ENCODE measurements at regions of chr17 and their contacts with region 1.

Region 1: GRCh38 chr17:80008383-80008840 is 27.3 kb downstream of the TBC1D16 start:
- DNase-seq: peak; percentile 53 to 84 (median 67)
- ATAC-seq: peak; percentile 88
- H3K4me3 ChIP-seq: no peak overlapping the region
- H3K4me3 Mint-ChIP-seq: no peak overlapping the region
- H3K27ac ChIP-seq: no peak overlapping the region
- H3K27ac Mint-ChIP-seq: no peak overlapping the region
- H3K4me1 ChIP-seq: peaks cover 17% of the 10 kb centered on the region
- H3K4me1 Mint-ChIP-seq: peaks cover 8% of the 10 kb centered on the region
- H3K27me3 ChIP-seq: no peaks in the 10 kb centered on the region
- H3K27me3 Mint-ChIP-seq: no peaks in the 10 kb centered on the region
- CTCF ChIP-seq: peak; percentile 81

Region 2: DNA sequence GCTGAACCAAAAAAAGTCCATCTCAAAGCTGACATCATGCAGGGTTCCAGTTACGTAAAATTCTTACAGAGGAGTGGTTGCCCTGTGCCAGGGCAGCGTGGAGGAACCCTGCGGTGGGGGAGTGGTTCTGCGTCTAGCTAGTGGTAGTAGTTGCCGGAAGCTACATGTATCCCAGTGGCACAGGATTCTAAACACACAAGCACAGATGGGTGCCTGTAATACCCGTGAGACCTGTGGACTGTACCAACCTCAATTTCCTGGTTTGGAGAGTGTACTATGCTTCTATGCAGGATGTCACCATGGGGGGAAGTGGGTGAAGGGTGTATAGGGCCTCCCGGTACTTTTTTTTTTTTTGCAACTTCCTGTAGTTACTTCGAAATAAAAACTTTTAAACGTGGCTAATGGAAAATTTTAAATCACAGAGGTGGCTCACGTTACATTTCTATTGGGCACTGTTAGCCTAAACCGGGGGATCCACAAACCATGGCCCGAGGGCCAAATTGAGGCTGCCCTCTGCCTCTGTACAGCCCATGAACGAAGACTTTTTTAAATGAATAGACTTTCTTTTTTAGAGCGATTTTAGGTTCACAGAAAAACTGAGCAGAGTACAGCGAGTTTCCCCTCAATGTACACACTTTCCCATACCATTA is 11.3 kb before region 1 on chr17:
- CTCF ChIA-PET with region 1: interaction called, 7 read pairs
- POLR2A ChIA-PET with region 1: interaction called, 11 read pairs
- intact Hi-C with region 1: no loop called
- DNase-seq: peak; percentile 45 to 98 (median 66)
- ATAC-seq: peak; percentile 95
- H3K4me3 ChIP-seq: peak overlapping the region; percentile 41
- H3K4me3 Mint-ChIP-seq: peak overlapping the region; percentile 85
- H3K27ac ChIP-seq: peak overlapping the region; percentile 76 to 93
- H3K27ac Mint-ChIP-seq: peak overlapping the region; percentile 87
- H3K4me1 ChIP-seq: peaks cover 58% of the 10 kb centered on the region
- H3K4me1 Mint-ChIP-seq: peaks cover 51% of the 10 kb centered on the region
- H3K27me3 ChIP-seq: no peaks in the 10 kb centered on the region
- H3K27me3 Mint-ChIP-seq: no peaks in the 10 kb centered on the region
- CTCF ChIP-seq: no peak

Region 3: DNA sequence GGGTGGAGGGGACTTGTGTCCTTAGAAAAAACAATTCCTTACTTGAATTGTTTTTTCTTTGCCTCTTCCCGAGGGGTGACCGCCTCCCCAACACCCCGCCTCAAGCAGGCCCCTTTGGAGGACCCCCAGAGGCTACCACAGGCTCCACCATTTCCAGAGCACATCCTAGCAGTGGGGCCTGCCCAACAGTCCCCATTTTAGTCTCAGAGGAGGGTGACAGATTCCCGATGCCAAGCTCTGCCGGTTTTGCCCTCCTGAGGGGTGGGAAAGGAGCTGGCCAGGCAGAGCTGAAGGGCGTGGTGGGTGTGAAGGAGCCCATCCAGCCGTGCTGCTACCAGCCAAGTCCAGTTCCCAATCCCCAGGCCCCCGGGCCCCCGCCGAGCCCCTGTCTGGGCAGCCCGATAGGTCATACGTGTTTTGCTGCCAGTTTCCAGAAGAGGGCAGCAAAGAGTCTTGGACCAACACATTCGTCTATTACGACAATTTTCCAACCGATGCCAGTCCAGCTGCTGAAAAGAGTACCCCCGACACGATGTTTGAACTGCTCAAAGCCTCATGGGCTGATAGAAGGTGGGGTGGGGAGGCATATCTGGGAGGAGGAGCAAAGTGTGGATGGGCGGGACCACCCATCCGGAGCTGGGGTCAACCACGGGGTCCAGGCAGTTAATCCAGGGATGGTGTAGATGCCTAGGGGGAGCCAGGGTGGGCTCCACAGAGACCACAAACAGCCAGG is 74.2 kb after region 1 on chr17:
- CTCF ChIA-PET with region 1: interaction called, 3 read pairs
- POLR2A ChIA-PET with region 1: no interaction called
- intact Hi-C with region 1: loop called in 1 of 2 experiments (anchors 5 kb)
- DNase-seq: peak; percentile 38 to 82 (median 51)
- ATAC-seq: peak; percentile 72
- H3K4me3 ChIP-seq: no peak overlapping the region
- H3K4me3 Mint-ChIP-seq: no peak overlapping the region
- H3K27ac ChIP-seq: no peak overlapping the region
- H3K27ac Mint-ChIP-seq: no peak overlapping the region
- H3K4me1 ChIP-seq: peaks cover 6% of the 10 kb centered on the region
- H3K4me1 Mint-ChIP-seq: peaks cover 6% of the 10 kb centered on the region
- H3K27me3 ChIP-seq: no peaks in the 10 kb centered on the region
- H3K27me3 Mint-ChIP-seq: peaks cover 5% of the 10 kb centered on the region
- CTCF ChIP-seq: peak; percentile 82

Region 4: GRCh38 chr17:80203471-80203963 is 195.1 kb after region 1 on chr17:
- CTCF ChIA-PET with region 1: no interaction called
- POLR2A ChIA-PET with region 1: no interaction called
- intact Hi-C with region 1: no loop called
- DNase-seq: no peak
- ATAC-seq: no peak
- H3K4me3 ChIP-seq: no peak overlapping the region
- H3K4me3 Mint-ChIP-seq: no peak overlapping the region
- H3K27ac ChIP-seq: no peak overlapping the region
- H3K27ac Mint-ChIP-seq: no peak overlapping the region
- H3K4me1 ChIP-seq: no peaks in the 10 kb centered on the region
- H3K4me1 Mint-ChIP-seq: no peaks in the 10 kb centered on the region
- H3K27me3 ChIP-seq: no peaks in the 10 kb centered on the region
- H3K27me3 Mint-ChIP-seq: no peaks in the 10 kb centered on the region
- CTCF ChIP-seq: no peak

Region 5: DNA sequence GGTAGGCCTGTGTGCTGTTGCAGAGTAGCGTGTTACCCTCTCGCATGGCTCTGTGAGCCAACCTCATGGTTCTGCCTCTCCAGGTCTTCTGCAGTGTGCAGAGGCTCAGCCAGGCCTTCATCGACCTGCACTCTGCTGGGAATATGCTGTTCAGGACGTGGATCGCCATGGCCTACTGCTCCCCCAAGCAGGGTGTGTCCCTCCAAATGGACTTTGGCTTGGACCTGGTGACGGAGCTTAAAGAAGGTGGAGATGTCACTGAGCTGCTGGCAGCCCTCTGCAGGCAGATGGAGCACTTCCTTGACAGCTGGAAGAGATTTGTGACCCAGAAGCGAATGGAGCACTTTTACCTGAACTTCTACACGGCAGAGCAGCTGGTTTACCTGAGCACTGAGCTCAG is 330.7 kb after region 1 on chr17:
- CTCF ChIA-PET with region 1: no interaction called
- POLR2A ChIA-PET with region 1: no interaction called
- intact Hi-C with region 1: no loop called
- DNase-seq: no peak
- ATAC-seq: no peak
- H3K4me3 ChIP-seq: no peak overlapping the region
- H3K4me3 Mint-ChIP-seq: no peak overlapping the region
- H3K27ac ChIP-seq: no peak overlapping the region
- H3K27ac Mint-ChIP-seq: no peak overlapping the region
- H3K4me1 ChIP-seq: no peaks in the 10 kb centered on the region
- H3K4me1 Mint-ChIP-seq: no peaks in the 10 kb centered on the region
- H3K27me3 ChIP-seq: no peaks in the 10 kb centered on the region
- H3K27me3 Mint-ChIP-seq: no peaks in the 10 kb centered on the region
- CTCF ChIP-seq: no peak